Activated CD8-positive, alpha-beta T cell treated with anti-CD3 and anti-CD28 coated beads, Interleukin-2, amount 10 ng/mL, durations not matched to agents 7 days and 5 days (primary cell): ENCODE measurements at regions of chr1 and their contacts with region 1.

Region 1: GRCh38 chr1:26233903-26234643 is at the start of gene CEP85:
- DNase-seq: peak; percentile 99
- ATAC-seq: peak; percentile 96
- H3K4me3 Mint-ChIP-seq: peak within 1 kb of the TSS; percentile 97
- H3K27ac Mint-ChIP-seq: peak within 1 kb of the TSS; percentile 93
- H3K4me1 Mint-ChIP-seq: peaks cover 35% of the 10 kb centered on the region
- H3K27me3 Mint-ChIP-seq: no peaks in the 10 kb centered on the region
- total RNA-seq, gene CEP85: 48.7 to 49.1 TPM

Region 2: DNA sequence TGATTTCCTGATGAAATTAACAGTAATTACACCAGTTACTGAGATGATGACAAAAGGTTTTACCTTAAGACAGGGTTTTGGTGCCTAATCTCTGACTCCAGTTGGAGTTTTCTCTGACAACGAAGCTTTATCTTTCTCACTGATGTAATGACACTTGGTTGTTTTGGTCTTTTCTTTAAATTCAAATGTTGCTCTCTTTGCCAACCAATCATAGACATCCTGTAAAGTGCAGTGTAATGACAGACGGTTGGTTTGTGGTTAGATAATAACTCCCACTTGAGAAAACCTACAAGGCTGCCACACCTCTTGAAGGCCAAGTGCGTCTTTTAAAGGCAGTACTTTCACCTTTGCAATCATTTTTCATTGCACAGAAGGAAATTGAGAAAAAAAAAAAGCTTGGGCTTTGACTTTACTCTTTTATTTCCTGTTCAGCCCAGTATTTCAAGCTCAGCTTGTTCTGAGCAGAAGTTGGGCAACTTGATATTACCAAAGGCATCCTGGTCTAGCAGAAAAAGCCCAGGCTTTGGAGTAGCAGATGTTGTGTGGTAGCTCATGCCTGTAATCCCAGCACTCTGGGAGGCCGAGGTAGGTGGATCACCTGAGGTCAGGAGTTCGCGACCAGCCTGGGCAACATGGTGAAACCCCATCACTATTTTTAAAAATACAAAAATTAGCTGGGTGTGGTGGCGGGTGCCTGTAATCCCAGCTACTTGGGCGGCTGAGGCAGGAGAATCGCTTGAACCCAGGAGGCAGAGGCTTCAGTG is 107.6 kb before region 1 on chr1:
- CTCF ChIA-PET with region 1: interaction called, 18 read pairs
- POLR2A ChIA-PET with region 1: interaction called, 3 read pairs
- DNase-seq: peak; percentile 83
- ATAC-seq: peak; percentile 98
- H3K4me3 Mint-ChIP-seq: peak overlapping the region; percentile 76
- H3K27ac Mint-ChIP-seq: peak overlapping the region; percentile 94
- H3K4me1 Mint-ChIP-seq: peaks cover 66% of the 10 kb centered on the region
- H3K27me3 Mint-ChIP-seq: no peaks in the 10 kb centered on the region

Region 3: DNA sequence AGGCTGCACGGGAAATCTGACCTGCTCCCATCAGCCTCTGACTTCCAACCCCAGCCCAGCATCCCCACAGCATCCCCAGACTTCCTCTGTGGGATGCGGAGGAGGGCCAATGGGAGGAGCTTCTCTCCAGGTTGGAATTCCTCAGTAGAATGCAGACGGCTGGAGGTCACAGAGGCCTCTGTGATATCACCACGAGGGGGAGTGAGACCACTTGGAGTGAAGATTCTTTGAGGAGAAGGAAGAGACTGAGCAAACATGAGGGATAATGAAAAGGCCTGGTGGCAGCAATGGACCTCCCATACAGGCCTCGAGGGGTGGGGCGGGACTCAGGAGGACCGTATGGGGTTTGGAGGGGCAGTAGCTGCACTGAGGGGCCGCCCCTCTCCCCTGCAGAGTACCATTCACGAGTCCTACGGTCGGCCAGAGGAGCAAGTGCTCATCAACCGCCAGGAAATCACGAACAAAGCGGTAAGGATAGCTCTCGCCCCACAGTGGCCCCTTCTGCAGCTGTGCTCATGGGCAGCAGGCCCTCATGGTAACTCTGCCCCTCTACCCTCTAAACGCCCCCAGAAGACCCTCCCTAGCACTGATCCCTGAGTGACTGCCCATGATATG is 43.6 kb before region 1 on chr1 and contains the start of gene CATSPER4:
- CTCF ChIA-PET with region 1: interaction called, 13 read pairs
- POLR2A ChIA-PET with region 1: interaction called, 3 read pairs
- DNase-seq: no peak
- ATAC-seq: no peak
- H3K4me3 Mint-ChIP-seq: no peak within 1 kb of the TSS
- H3K27ac Mint-ChIP-seq: peak within 1 kb of the TSS; percentile 70
- H3K4me1 Mint-ChIP-seq: peaks cover 6% of the 10 kb centered on the region
- H3K27me3 Mint-ChIP-seq: peaks cover 2% of the 10 kb centered on the region
- total RNA-seq, gene CATSPER4: not detected

Region 4: DNA sequence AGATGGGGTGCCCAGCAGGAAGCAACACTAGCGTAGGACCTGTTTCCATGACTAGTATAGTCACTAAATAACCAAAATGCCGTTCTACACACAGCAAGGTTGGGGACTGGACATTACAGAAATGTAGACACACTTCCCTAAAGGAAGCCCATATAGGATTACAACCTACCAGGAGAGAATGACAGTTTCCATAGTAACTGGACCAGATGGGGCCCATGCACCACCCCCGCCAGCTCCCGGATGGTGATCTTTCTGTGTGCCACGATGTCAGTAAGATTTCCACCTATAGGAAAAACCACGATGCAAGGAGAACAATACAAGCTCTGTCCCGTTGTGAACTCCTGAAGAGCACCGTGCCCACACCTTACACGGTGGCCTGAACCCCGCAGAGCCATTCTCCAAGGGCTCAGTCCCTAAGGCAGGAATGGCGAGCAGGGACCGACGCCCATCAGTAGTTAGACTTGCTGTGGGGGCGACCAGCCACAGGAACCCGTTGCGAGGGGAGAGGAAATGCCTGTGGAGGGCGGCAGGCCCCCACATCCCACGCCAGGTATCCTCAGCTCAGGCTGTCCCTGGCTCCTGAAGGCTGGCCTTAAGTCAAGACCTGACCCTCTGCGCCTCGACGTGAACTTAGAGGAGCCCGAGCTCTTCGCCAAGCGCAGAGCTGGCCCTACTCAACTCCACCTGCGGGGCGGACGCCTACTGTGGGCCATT is 13.7 kb before region 1 on chr1:
- CTCF ChIA-PET with region 1: interaction called, 28 read pairs
- POLR2A ChIA-PET with region 1: no interaction called
- DNase-seq: no peak
- ATAC-seq: no peak
- H3K4me3 Mint-ChIP-seq: no peak overlapping the region
- H3K27ac Mint-ChIP-seq: no peak overlapping the region
- H3K4me1 Mint-ChIP-seq: peaks cover 5% of the 10 kb centered on the region
- H3K27me3 Mint-ChIP-seq: peaks cover 20% of the 10 kb centered on the region

Region 5: GRCh38 chr1:26321315-26322041 is 87.4 kb after region 1 on chr1:
- CTCF ChIA-PET with region 1: interaction called, 26 read pairs
- POLR2A ChIA-PET with region 1: interaction called, 7 read pairs
- DNase-seq: peak; percentile 97
- ATAC-seq: peak; percentile 76
- H3K4me3 Mint-ChIP-seq: peak overlapping the region; percentile 84
- H3K27ac Mint-ChIP-seq: peak overlapping the region; percentile 94
- H3K4me1 Mint-ChIP-seq: peaks cover 49% of the 10 kb centered on the region
- H3K27me3 Mint-ChIP-seq: no peaks in the 10 kb centered on the region

Region 6: GRCh38 chr1:26417111-26417759 is 183.2 kb after region 1 on chr1:
- CTCF ChIA-PET with region 1: interaction called, 31 read pairs
- POLR2A ChIA-PET with region 1: no interaction called
- DNase-seq: peak; percentile 91
- ATAC-seq: peak; percentile 100
- H3K4me3 Mint-ChIP-seq: no peak overlapping the region
- H3K27ac Mint-ChIP-seq: no peak overlapping the region
- H3K4me1 Mint-ChIP-seq: peaks cover 7% of the 10 kb centered on the region
- H3K27me3 Mint-ChIP-seq: peaks cover 49% of the 10 kb centered on the region

Region 7: DNA sequence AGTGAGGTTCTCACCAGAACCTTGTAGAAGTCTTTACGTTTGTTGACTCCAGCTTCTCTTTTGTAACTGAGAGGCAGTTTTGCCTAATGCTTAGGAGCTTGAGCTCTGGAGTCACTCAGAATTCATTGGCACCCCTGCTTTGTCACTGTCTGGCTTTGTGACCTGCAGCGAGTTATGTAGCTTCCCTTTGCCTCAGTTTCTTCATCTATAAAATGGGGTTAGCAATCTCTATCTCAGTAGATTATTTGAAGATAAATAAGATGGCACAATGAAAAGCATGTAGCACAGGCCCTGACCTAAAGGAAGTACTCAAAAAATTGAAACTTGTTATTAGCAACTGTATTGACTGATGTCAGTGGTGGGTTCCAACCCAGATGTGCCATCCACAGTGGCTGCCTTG is 206.2 kb after region 1 on chr1:
- CTCF ChIA-PET with region 1: no interaction called
- POLR2A ChIA-PET with region 1: no interaction called
- DNase-seq: no peak
- ATAC-seq: no peak
- H3K4me3 Mint-ChIP-seq: no peak overlapping the region
- H3K27ac Mint-ChIP-seq: no peak overlapping the region
- H3K4me1 Mint-ChIP-seq: no peaks in the 10 kb centered on the region
- H3K27me3 Mint-ChIP-seq: no peaks in the 10 kb centered on the region